ENCODE measurements at regions of chr14 and their contacts with region 1.

Region 1: DNA sequence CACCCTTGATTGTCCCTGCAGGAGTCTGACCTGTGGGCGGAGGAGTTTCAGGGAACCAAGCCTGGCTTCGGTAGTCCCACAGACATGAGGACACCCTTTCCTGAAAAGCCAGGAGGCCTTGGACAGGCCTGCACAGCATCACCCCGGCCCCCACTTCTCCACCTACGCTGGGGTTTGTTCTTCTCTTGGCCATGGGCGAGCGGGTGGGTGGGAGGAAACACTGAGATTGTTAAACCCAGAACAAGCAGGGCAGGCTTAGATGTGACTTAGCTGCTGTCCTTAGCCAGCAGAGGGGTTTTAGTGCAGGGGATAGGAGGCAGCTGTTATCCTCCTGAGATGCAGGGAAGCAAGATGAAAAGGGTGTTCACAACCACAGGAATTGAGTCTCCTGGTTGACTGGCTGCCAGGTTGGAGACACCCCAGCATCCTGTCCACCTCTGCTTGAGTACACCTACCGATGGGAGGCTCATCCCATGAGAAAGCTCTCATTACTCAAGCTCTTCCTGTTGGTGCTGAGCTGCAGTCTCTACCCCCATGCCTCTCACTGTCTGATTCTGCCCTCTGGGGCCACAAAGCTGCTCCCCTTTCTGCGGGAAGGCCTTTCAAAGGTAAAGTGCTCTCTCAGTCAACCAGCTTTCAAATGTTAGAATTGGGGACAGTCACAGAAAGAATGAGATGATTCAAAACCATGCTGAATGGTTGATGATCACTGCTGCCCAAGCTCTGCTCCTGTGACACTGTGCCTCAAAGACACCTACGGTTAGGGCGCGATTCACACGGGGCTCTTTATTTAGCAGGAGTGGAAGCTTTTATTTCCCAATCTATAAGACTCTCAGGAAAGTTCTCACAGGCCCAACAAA is 86.3 kb downstream of the IRF2BPL start:
- DNase-seq: no peak
- ATAC-seq: no peak
- H3K4me3 Mint-ChIP-seq: no peak overlapping the region
- H3K27ac Mint-ChIP-seq: peak overlapping the region; percentile 33
- H3K4me1 Mint-ChIP-seq: peaks cover 18% of the 10 kb centered on the region
- H3K27me3 Mint-ChIP-seq: no peaks in the 10 kb centered on the region

Region 2: GRCh38 chr14:76956316-76957090 is 14.3 kb after region 1 on chr14:
- CTCF ChIA-PET with region 1: interaction called, 14 read pairs
- DNase-seq: peak; percentile 95
- ATAC-seq: peak; percentile 67
- H3K4me3 Mint-ChIP-seq: peak overlapping the region; percentile 70
- H3K27ac Mint-ChIP-seq: peak overlapping the region; percentile 91
- H3K4me1 Mint-ChIP-seq: peaks cover 74% of the 10 kb centered on the region
- H3K27me3 Mint-ChIP-seq: no peaks in the 10 kb centered on the region

Measured in activated CD8-positive, alpha-beta memory T cell treated with anti-CD3 and anti-CD28 coated beads, Interleukin-2, amount 10 ng/mL, durations not matched to agents 7 days and 5 days (primary cell).